Panc1 (cell line): ENCODE measurements at regions of chr14 and their contacts with region 1.

Region 1: DNA sequence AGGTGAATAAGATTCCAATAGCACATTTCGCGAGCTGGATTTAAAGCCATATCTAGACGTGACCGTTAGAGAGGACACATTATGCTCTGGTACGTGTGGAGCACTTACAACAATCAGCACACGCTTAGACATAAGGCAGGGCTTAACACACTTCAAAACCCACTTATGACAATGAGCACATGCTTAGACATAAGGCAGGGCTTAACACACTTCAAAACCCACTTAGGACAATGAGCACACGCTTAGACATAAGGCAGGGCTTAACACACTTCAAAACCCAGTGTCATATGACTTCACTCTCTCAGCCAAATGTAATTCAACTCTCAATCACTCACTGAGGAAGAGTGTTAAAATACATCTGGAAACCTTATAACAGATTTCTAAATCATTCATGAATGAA is 11.2 kb upstream of the PLD4 start:
- DNase-seq: no peak
- ATAC-seq: no peak
- H3K4me3 ChIP-seq: no peak overlapping the region
- H3K27ac ChIP-seq: no peak overlapping the region
- H3K4me1 ChIP-seq: no peaks in the 10 kb centered on the region
- H3K27me3 ChIP-seq: no peaks in the 10 kb centered on the region
- CTCF ChIP-seq: no peak

Region 2: DNA sequence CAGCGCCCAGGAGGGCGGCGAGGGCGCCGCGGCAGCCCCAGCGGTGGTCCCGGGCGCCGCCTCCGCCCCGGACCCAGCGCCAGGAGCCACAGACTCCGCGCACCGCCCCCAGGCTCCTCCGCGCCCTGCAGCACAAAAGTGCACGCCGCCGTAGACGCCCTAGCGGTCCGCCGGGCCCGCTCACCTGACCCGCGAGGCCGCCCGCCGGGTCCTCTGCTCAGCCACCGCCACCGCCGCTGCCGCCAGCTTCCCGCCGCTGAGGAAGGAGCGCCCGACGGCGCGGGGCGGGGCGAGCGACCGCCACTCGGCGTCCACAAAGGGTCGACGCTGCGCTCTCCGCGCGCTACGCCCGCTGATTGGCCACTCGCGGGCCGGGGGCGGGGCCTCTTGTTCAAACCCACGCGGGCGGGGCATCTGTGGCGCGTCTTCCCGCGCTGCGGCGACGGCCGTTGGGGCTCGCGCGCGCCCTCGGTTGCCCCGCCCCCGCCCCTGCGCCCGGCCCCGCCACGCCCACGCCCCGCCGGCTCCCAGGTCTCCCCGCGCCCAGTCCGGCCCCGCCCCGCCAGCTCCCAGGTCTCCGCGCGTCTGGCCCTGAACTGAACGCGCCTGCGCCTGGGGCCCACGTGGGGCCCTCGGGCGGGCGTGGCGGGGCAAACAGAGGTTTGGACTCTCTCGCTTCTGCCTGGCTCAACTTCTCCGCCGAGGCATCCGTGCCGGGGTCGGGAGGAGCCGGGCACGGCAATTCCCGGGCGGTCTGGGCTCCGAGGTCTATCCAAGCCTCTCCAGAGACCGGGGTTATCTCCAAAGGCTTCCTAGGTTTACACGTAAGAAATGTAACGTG is 107.6 kb after region 1 on chr14 and contains the start of gene CDCA4:
- CTCF ChIA-PET with region 1: no interaction called
- POLR2A ChIA-PET with region 1: no interaction called
- in situ Hi-C with region 1: no loop called
- intact Hi-C with region 1: no loop called
- DNase-seq: no peak
- ATAC-seq: peak; percentile 85
- H3K4me3 ChIP-seq: peak within 1 kb of the TSS; percentile 86 to 88
- H3K27ac ChIP-seq: peak within 1 kb of the TSS; percentile 99
- H3K4me1 ChIP-seq: peaks cover 47% of the 10 kb centered on the region
- H3K27me3 ChIP-seq: no peaks in the 10 kb centered on the region
- CTCF ChIP-seq: no peak
- total RNA-seq, gene CDCA4: 39.9 TPM

Region 3: GRCh38 chr14:105107781-105108515 is 194.5 kb after region 1 on chr14:
- CTCF ChIA-PET with region 1: interaction called, 16 read pairs
- POLR2A ChIA-PET with region 1: no interaction called
- in situ Hi-C with region 1: no loop called
- intact Hi-C with region 1: no loop called
- DNase-seq: no peak
- ATAC-seq: no peak
- H3K4me3 ChIP-seq: no peak overlapping the region
- H3K27ac ChIP-seq: no peak overlapping the region
- H3K4me1 ChIP-seq: no peaks in the 10 kb centered on the region
- H3K27me3 ChIP-seq: no peaks in the 10 kb centered on the region
- CTCF ChIP-seq: no peak